Breast epithelium (tissue), 4 donors: ENCODE measurements at regions of chr2 and their contacts with region 1.

Region 1: GRCh38 chr2:216235462-216235861 is 126.3 kb downstream of the XRCC5 start:
- DNase-seq: no peak
- H3K4me3 ChIP-seq: no peak overlapping the region
- H3K27ac ChIP-seq: no peak overlapping the region
- H3K4me1 ChIP-seq: no peaks in the 10 kb centered on the region
- H3K27me3 ChIP-seq: no peaks in the 10 kb centered on the region
- CTCF ChIP-seq: no peak
- POLR2A ChIP-seq: no peak

Region 2: DNA sequence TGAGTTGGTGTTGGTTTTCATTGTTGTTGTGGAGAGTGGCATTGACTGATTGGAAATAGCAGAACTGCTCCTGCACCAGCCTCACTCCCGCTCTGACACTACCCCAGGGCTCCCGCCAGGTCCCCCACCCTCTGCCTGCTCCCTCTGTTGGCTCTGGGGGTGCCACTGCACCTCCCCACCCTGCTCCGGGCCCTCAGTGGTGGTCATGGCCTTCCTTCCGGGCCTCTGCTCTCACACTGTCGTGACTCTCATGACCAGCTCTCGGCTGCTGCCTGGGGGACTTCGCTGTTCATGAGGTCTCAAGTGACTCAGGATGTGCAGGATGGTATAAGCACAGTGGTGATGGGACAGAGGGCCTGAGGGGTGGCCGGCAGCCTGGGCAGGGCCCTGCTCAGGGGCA is 23.6 kb after region 1 on chr2:
- intact Hi-C with region 1: loop called (anchors 2 kb)
- DNase-seq: no peak
- H3K4me3 ChIP-seq: no peak overlapping the region
- H3K27ac ChIP-seq: no peak overlapping the region
- H3K4me1 ChIP-seq: no peaks in the 10 kb centered on the region
- H3K27me3 ChIP-seq: no peaks in the 10 kb centered on the region
- CTCF ChIP-seq: no peak
- POLR2A ChIP-seq: no peak

Region 3: GRCh38 chr2:216308576-216308975 is 73.1 kb after region 1 on chr2:
- intact Hi-C with region 1: no loop called
- DNase-seq: no peak
- H3K4me3 ChIP-seq: no peak overlapping the region
- H3K27ac ChIP-seq: no peak overlapping the region
- H3K4me1 ChIP-seq: no peaks in the 10 kb centered on the region
- H3K27me3 ChIP-seq: no peaks in the 10 kb centered on the region
- CTCF ChIP-seq: no peak
- POLR2A ChIP-seq: no peak